MCF 10A (cell line): ENCODE measurements at regions of chr12 and their contacts with region 1.

Region 1: GRCh38 chr12:12671850-12672660 is 23.9 kb downstream of the GPR19 start:
- DNase-seq: peak; percentile 27
- H3K4me3 Mint-ChIP-seq: no peak overlapping the region
- H3K27ac Mint-ChIP-seq: no peak overlapping the region
- H3K4me1 Mint-ChIP-seq: no peaks in the 10 kb centered on the region
- H3K27me3 Mint-ChIP-seq: no peaks in the 10 kb centered on the region
- CTCF ChIP-seq: no peak

Region 2: DNA sequence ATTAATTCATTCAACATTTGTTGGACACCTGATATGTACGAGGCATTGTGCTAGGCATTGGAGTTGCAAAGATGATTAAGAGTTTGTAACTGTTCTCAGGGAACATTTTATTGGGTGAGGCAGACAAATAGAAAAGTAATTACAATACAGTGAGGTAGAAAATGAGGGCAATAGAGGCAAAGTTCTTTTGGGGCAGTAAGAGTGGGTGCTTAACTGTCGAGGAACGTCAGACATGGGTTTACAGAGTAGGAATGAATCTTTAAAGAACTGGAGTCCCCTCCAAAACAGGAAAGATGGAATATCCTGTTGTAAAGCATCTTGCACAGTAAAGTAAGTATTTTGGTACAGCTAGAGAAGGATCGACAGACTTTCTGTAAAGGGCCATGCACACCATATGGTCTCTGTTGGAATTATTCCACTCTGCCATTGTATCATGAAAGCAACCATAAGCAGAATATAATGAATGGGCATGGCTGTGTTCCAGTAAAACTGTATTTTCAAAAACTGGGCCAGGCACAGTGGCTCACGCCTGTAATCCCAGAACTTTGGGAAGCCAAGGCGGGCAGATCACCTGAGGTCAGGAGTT is 51.2 kb before region 1 on chr12:
- CTCF ChIA-PET with region 1: no interaction called
- POLR2A ChIA-PET with region 1: no interaction called
- intact Hi-C with region 1: no loop called
- DNase-seq: no peak
- H3K4me3 Mint-ChIP-seq: no peak overlapping the region
- H3K27ac Mint-ChIP-seq: no peak overlapping the region
- H3K4me1 Mint-ChIP-seq: peaks cover 6% of the 10 kb centered on the region
- H3K27me3 Mint-ChIP-seq: no peaks in the 10 kb centered on the region
- CTCF ChIP-seq: no peak

Region 3: GRCh38 chr12:12654691-12655460 is 17.2 kb before region 1 on chr12:
- CTCF ChIA-PET with region 1: interaction called, 11 read pairs
- POLR2A ChIA-PET with region 1: no interaction called
- intact Hi-C with region 1: no loop called
- DNase-seq: no peak
- H3K4me3 Mint-ChIP-seq: no peak overlapping the region
- H3K27ac Mint-ChIP-seq: no peak overlapping the region
- H3K4me1 Mint-ChIP-seq: peaks cover 12% of the 10 kb centered on the region
- H3K27me3 Mint-ChIP-seq: no peaks in the 10 kb centered on the region
- CTCF ChIP-seq: no peak

Region 4: GRCh38 chr12:12661086-12661485 is 11.0 kb before region 1 on chr12:
- CTCF ChIA-PET with region 1: interaction called, 11 read pairs
- POLR2A ChIA-PET with region 1: no interaction called
- intact Hi-C with region 1: no loop called
- DNase-seq: peak; percentile 81
- H3K4me3 Mint-ChIP-seq: peak overlapping the region; percentile 46
- H3K27ac Mint-ChIP-seq: peak overlapping the region; percentile 51
- H3K4me1 Mint-ChIP-seq: peaks cover 24% of the 10 kb centered on the region
- H3K27me3 Mint-ChIP-seq: no peaks in the 10 kb centered on the region
- CTCF ChIP-seq: no peak